Activated CD4-positive, alpha-beta T cell treated with anti-CD3 and anti-CD28 coated beads, Interleukin-2, amount 10 ng/mL, durations not matched to agents 24 days and 14 days (primary cell): ENCODE measurements at regions of chr19 and their contacts with region 1.

Region 1: GRCh38 chr19:40662921-40663694 is 27.3 kb downstream of the NUMBL start:
- DNase-seq: peak; percentile 98
- H3K4me3 Mint-ChIP-seq: peak overlapping the region; percentile 74
- H3K27ac Mint-ChIP-seq: peak overlapping the region; percentile 77
- H3K4me1 Mint-ChIP-seq: peaks cover 15% of the 10 kb centered on the region
- H3K27me3 Mint-ChIP-seq: peaks cover 4% of the 10 kb centered on the region

Region 2: GRCh38 chr19:40609561-40610395 is 53.3 kb before region 1 on chr19:
- intact Hi-C with region 1: loop called (anchors 2 kb)
- DNase-seq: peak; percentile 97
- H3K4me3 Mint-ChIP-seq: peak overlapping the region; percentile 95
- H3K27ac Mint-ChIP-seq: peak overlapping the region; percentile 97
- H3K4me1 Mint-ChIP-seq: peaks cover 43% of the 10 kb centered on the region
- H3K27me3 Mint-ChIP-seq: no peaks in the 10 kb centered on the region

Region 3: DNA sequence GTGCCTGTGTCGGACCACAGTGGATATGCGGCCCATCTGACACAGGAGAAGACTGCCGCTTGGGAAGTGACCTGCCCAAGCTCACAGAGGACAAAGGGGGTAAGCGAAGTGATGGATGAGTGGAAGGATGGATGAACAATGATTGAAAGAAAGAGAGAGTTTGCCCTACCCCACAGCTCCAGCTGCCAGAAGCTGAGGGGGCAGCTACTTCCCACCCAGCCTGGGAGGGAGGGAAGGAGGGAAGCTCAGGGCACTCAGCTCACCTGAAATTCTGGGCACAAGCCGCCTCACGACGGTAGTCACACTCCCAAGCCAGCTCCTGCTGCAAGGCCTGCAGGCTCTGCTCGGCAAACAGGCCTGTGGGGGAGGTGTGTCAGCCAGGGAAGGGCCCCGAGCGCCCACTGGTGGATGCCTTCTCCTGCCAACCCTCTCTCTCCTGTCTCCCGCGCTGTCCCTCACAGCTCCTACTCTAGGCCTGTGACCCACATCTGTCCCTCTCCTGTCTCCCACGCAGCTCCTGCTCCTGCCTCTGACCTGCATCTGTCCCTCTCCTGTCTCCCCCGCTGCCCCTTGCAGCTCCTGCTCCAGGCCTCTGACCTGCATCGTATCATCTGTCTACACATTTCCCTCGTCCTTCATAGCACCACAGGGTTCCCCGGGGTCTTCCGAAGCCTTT is 39.4 kb after region 1 on chr19:
- intact Hi-C with region 1: no loop called
- DNase-seq: no peak
- H3K4me3 Mint-ChIP-seq: no peak overlapping the region
- H3K27ac Mint-ChIP-seq: no peak overlapping the region
- H3K4me1 Mint-ChIP-seq: peaks cover 2% of the 10 kb centered on the region
- H3K27me3 Mint-ChIP-seq: no peaks in the 10 kb centered on the region

Region 4: DNA sequence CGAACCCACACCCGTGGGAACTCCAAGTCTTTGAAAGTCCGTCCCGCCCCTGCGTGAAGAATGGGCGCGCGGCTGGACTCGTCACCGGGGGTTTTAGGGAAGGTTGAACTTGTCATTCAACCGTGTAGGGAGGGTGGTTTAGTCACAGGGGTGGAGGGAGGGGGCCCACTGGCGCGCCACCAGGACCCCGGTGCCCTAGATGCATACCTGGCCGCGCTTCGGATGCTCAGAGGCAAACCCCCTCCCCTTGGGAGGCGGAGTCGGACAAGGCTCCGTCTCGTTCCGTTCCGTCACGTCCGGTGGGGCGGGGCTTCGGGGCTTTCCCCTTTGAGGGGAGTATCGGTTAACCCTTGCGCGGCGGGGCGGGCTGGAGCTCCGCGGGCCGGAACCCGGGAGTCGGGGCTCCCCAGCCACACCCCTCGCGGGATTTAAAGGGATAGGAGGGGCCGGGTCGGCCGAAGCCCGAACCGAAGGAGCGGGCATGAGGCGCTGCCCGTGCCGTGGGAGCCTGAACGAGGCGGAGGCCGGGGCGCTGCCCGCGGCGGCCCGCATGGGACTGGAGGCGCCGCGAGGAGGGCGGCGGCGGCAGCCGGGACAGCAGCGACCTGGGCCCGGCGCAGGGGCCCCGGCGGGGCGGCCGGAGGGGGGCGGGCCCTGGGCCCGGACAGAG is 53.7 kb after region 1 on chr19 and contains the starts of genes COQ8B and ITPKC:
- intact Hi-C with region 1: loop called (anchors 2 kb)
- DNase-seq: peak; percentile 100
- H3K4me3 Mint-ChIP-seq: peak within 1 kb of the TSS; percentile 90
- H3K27ac Mint-ChIP-seq: peak within 1 kb of the TSS; percentile 94
- H3K4me1 Mint-ChIP-seq: peaks cover 52% of the 10 kb centered on the region
- H3K27me3 Mint-ChIP-seq: no peaks in the 10 kb centered on the region
- total RNA-seq, gene COQ8B: 32.5 and 33.4 TPM in 2 replicates
- total RNA-seq, gene ITPKC: 7.7 and 8.6 TPM in 2 replicates

Region 5: GRCh38 chr19:40806488-40807468 is 143.7 kb after region 1 on chr19:
- intact Hi-C with region 1: loop called (anchors 1 kb)
- DNase-seq: peak; percentile 94
- H3K4me3 Mint-ChIP-seq: peak overlapping the region; percentile 77
- H3K27ac Mint-ChIP-seq: peak overlapping the region; percentile 89
- H3K4me1 Mint-ChIP-seq: peaks cover 75% of the 10 kb centered on the region
- H3K27me3 Mint-ChIP-seq: peaks cover 4% of the 10 kb centered on the region

Region 6: GRCh38 chr19:41144403-41144802 is 481.3 kb after region 1 on chr19:
- intact Hi-C with region 1: loop called (anchors 1 kb)
- DNase-seq: peak; percentile 96
- H3K4me3 Mint-ChIP-seq: no peak overlapping the region
- H3K27ac Mint-ChIP-seq: no peak overlapping the region
- H3K4me1 Mint-ChIP-seq: no peaks in the 10 kb centered on the region
- H3K27me3 Mint-ChIP-seq: peaks cover 21% of the 10 kb centered on the region